HepG2 (cell line): ENCODE measurements at regions of chr20 and their contacts with region 1.

Region 1: GRCh38 chr20:49812463-49813304 is at the start of gene SLC9A8:
- DNase-seq: peak; percentile 84
- ATAC-seq: peak; percentile 96
- H3K4me3 ChIP-seq: peak within 1 kb of the TSS; percentile 85 to 96 (median 95)
- H3K27ac ChIP-seq: peak within 1 kb of the TSS; percentile 77
- H3K4me1 ChIP-seq: peaks cover 31% of the 10 kb centered on the region
- H3K27me3 ChIP-seq: no peaks in the 10 kb centered on the region; a peak in 1 of 5 replicates
- CTCF ChIP-seq: peak; percentile 53
- EP300 ChIP-seq: peak in 1 of 2 experiments; percentile 46; a peak in 2 of 4 replicates
- POLR2A ChIP-seq: peak; percentile 74 to 91
- RAD21 ChIP-seq: peak; percentile 77
- total RNA-seq, gene SLC9A8: 2.6 and 7.4 TPM in 2 replicates

Region 2: DNA sequence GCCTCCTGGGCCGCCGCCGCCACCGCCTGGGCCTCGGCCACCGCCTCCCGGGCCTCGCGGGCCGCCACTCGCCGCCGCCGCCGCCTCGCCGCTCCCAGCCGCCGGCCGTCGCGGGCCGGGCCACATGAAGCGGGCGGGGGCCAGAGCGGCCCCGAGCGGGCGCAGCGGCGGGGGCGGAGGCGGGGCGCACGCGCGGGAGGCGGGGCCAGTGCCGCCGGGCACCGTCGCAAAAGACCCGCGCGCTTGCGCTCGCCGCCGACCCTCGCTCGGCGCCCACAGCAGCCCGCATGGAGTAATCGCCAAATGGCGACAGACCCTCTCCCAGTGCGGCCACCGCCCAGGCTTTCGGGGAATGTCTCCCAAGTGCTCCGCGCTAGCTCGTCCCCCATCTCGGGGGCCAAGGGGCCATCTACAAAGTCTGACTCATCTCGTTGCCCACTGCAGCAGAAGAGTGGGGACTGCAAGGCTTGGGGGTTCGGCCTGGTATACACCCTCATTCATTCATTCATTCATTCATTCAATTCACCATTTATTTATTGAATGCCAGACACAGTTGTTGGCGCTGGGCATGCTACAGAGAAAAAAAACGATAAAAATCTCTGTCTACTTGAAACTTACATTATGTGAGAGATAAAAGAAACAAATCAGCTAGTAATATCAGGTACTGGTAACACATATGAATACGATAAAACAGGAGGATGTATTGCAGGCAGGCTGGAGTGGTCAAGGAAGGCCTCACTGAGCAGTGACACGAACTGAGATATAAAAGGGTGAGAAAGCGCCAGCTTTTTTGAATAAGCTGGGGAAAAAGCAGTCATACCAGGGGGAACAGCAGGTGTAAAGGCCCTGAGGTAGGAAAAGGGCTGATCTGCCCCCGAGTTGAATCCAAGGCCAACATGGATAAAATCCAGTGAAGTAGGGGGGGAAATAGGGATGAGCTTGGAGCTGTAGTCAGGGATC is 98.7 kb before region 1 on chr20 and contains the start of gene B4GALT5:
- CTCF ChIA-PET with region 1: no interaction called
- POLR2A ChIA-PET with region 1: interaction called, 10 read pairs
- in situ Hi-C with region 1: no loop called
- intact Hi-C with region 1: loop called (anchors 2 kb)
- DNase-seq: peak; percentile 66
- ATAC-seq: peak; percentile 80
- H3K4me3 ChIP-seq: peak within 1 kb of the TSS; percentile 87 to 97 (median 95)
- H3K27ac ChIP-seq: peak within 1 kb of the TSS; percentile 86
- H3K4me1 ChIP-seq: peaks cover 65% of the 10 kb centered on the region
- H3K27me3 ChIP-seq: no peaks in the 10 kb centered on the region; a peak in 1 of 5 replicates
- CTCF ChIP-seq: no peak
- EP300 ChIP-seq: no peak
- POLR2A ChIP-seq: peak; percentile 44 to 81; a peak in 3 of 4 replicates
- RAD21 ChIP-seq: peak; percentile 60
- total RNA-seq, gene B4GALT5: 26.7 and 30.9 TPM in 2 replicates

Region 3: DNA sequence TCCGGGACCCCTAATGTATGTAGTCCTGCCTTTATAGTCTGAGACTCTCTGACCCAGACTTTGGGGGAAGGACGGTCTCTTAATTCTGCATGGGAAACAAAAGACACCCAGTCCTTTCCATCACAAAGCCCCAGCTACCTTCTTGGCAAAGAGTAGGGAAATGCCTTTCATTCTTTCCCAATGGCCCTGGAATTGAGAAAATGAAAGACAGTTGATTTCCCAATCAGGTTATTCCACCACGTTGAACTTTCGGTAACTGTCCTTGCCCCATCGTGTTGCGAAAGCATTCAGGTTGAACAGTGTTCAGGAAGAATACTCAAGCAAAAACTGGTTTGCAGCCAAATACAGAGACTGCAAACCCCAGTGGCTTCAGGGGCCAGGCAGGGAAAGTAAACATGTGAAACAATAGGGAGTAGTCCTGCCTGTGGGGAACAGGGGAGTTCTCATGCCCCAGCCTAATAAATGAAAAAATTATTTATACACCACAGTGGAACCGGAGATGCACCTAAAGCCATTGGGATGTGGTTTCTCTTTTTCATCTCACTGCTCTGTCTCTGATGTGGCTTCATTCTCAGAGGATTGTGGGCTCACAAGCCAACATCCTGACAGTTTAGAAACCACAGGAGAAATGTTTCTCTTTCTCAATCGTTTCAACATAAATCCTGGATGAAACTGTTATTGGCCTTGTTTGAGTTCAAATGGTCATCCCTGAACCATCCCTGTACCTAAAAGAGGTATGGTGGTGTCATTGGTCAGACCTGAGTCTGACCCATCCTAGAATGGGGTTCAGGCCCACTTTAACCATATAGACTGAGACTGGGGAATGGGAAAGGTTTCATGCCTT is 44.3 kb before region 1 on chr20:
- CTCF ChIA-PET with region 1: no interaction called
- POLR2A ChIA-PET with region 1: interaction called, 6 read pairs
- in situ Hi-C with region 1: no loop called
- intact Hi-C with region 1: loop called (anchors 2 kb)
- DNase-seq: peak; percentile 100
- ATAC-seq: peak; percentile 85
- H3K4me3 ChIP-seq: peak overlapping the region in 2 of 3 experiments; percentile 11 to 45; a peak in 2 of 6 replicates
- H3K27ac ChIP-seq: peak overlapping the region; percentile 85
- H3K4me1 ChIP-seq: peaks cover 84% of the 10 kb centered on the region
- H3K27me3 ChIP-seq: no peaks in the 10 kb centered on the region
- CTCF ChIP-seq: peak; percentile 25
- EP300 ChIP-seq: peak; percentile 99 to 100
- POLR2A ChIP-seq: peak in 1 of 2 experiments; percentile 61; a peak in 2 of 4 replicates
- RAD21 ChIP-seq: peak; percentile 62

Region 4: GRCh38 chr20:49775229-49775693 is 37.4 kb before region 1 on chr20:
- CTCF ChIA-PET with region 1: no interaction called
- POLR2A ChIA-PET with region 1: interaction called, 32 read pairs
- in situ Hi-C with region 1: no loop called
- intact Hi-C with region 1: loop called (anchors 2 kb)
- DNase-seq: peak; percentile 96
- ATAC-seq: peak; percentile 83
- H3K4me3 ChIP-seq: peak overlapping the region in 2 of 3 experiments; percentile 16 to 52; a peak in 3 of 6 replicates
- H3K27ac ChIP-seq: peak overlapping the region; percentile 42
- H3K4me1 ChIP-seq: peaks cover 74% of the 10 kb centered on the region
- H3K27me3 ChIP-seq: no peaks in the 10 kb centered on the region
- CTCF ChIP-seq: peak; percentile 63
- EP300 ChIP-seq: peak in 1 of 2 experiments; percentile 89; a peak in 3 of 4 replicates
- POLR2A ChIP-seq: 0 out of 4 replicates have a peak, but pooled peaks of 1 of the 2 experiments have one; percentile 42
- RAD21 ChIP-seq: peak; percentile 67

Region 5: DNA sequence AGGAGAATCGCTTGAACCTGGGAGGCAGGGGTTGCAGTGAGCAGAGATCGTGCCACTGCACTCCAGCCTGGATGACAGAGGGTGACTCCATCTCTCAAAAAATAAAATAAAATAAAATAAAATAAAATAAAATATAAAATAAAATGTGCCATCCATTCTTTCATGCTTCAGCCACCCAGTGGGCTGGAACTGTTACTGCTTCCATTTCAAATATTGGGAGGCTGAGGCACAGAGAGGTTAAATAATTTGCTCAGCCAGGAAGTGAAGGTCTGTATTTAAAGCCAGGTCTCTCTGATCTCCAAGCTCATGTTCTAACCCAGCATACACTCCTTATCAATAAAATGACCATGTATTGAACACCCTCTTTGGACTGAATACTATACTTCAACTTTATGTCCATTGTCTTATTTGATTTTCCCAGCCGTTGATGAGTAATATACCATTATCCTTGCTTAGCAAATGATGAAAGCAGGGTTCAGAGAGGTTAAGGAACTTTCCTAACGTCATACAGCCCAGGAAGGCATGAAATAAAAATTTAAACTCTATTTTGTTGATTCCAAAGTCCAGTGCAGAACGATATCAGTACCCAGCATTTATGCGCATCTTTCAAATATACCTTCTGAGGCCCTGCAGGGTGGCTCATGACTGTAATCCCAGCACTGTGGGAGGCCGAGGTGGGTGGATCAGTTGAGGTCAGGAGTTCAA is 25.9 kb before region 1 on chr20:
- CTCF ChIA-PET with region 1: no interaction called
- POLR2A ChIA-PET with region 1: interaction called, 11 read pairs
- in situ Hi-C with region 1: no loop called
- intact Hi-C with region 1: no loop called
- DNase-seq: no peak
- ATAC-seq: no peak
- H3K4me3 ChIP-seq: no peak overlapping the region
- H3K27ac ChIP-seq: no peak overlapping the region
- H3K4me1 ChIP-seq: peaks cover 51% of the 10 kb centered on the region
- H3K27me3 ChIP-seq: no peaks in the 10 kb centered on the region; a peak in 1 of 5 replicates
- CTCF ChIP-seq: no peak
- EP300 ChIP-seq: no peak
- POLR2A ChIP-seq: no peak
- RAD21 ChIP-seq: no peak

Region 6: GRCh38 chr20:49797344-49797615 is 15.4 kb before region 1 on chr20:
- CTCF ChIA-PET with region 1: no interaction called
- POLR2A ChIA-PET with region 1: interaction called, 20 read pairs
- in situ Hi-C with region 1: no loop called
- intact Hi-C with region 1: no loop called
- DNase-seq: no peak
- ATAC-seq: peak; percentile 46
- H3K4me3 ChIP-seq: 0 out of 6 replicates have a peak overlapping the region, but pooled peaks of 1 of the 3 experiments have one; percentile 1
- H3K27ac ChIP-seq: no peak overlapping the region
- H3K4me1 ChIP-seq: peaks cover 62% of the 10 kb centered on the region
- H3K27me3 ChIP-seq: no peaks in the 10 kb centered on the region
- CTCF ChIP-seq: no peak
- EP300 ChIP-seq: no peak
- POLR2A ChIP-seq: no peak
- RAD21 ChIP-seq: no peak